ENCODE measurements at regions of chr20 and their contacts with region 1.

Region 1: DNA sequence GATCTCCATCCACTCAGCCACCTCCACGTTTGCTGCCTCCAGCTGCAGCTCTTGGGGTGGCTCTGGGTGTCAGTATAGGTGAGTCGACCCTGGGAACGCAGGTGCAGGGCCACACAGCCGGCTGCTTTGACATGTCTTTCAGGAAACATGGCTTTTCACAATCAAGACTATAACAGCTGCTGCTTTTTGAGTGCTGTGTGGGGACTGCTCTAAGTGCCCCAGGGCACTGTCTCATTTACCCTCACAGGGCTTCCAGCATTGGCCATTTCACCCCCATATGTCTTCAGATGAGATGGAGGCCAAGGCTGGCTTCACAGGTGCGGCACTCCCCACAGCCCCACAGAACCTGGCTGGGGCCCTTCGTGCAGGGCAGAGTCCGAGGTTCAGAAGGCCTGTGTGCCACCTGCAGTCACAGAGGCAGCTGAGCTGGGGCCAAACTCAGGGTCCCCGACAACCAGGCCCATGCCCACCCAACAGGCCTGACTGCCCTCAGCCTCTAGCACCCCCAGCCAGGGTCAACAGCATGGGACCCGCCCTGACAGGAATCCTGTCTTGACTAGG is 14.9 kb upstream of the CST7 start:
- DNase-seq: no peak
- ATAC-seq: no peak
- H3K4me3 Mint-ChIP-seq: no peak overlapping the region
- H3K27ac Mint-ChIP-seq: no peak overlapping the region
- H3K4me1 Mint-ChIP-seq: peaks cover 16% of the 10 kb centered on the region
- H3K27me3 Mint-ChIP-seq: no peaks in the 10 kb centered on the region; the same call in 1 of the 2 replicates
- CTCF ChIP-seq: no peak

Region 2: GRCh38 chr20:24781422-24781980 is 152.7 kb before region 1 on chr20:
- CTCF ChIA-PET with region 1: interaction called, 12 read pairs
- POLR2A ChIA-PET with region 1: no interaction called
- DNase-seq: peak; percentile 44
- ATAC-seq: peak; percentile 78
- H3K4me3 Mint-ChIP-seq: no peak overlapping the region
- H3K27ac Mint-ChIP-seq: no peak overlapping the region
- H3K4me1 Mint-ChIP-seq: no peaks in the 10 kb centered on the region
- H3K27me3 Mint-ChIP-seq: no peaks in the 10 kb centered on the region; the same call in none of the 2 replicates
- CTCF ChIP-seq: 0 out of 2 replicates have a peak, but pooled peaks have one; percentile 17

Region 3: GRCh38 chr20:24955045-24955444 is 20.9 kb after region 1 on chr20:
- CTCF ChIA-PET with region 1: interaction called, 11 read pairs
- POLR2A ChIA-PET with region 1: no interaction called
- DNase-seq: no peak
- ATAC-seq: no peak
- H3K4me3 Mint-ChIP-seq: no peak overlapping the region
- H3K27ac Mint-ChIP-seq: no peak overlapping the region
- H3K4me1 Mint-ChIP-seq: peaks cover 14% of the 10 kb centered on the region
- H3K27me3 Mint-ChIP-seq: no peaks in the 10 kb centered on the region
- CTCF ChIP-seq: no peak